Transverse colon (tissue), 4 donors: ENCODE measurements at regions of chr17 and their contacts with region 1.

Region 1: DNA sequence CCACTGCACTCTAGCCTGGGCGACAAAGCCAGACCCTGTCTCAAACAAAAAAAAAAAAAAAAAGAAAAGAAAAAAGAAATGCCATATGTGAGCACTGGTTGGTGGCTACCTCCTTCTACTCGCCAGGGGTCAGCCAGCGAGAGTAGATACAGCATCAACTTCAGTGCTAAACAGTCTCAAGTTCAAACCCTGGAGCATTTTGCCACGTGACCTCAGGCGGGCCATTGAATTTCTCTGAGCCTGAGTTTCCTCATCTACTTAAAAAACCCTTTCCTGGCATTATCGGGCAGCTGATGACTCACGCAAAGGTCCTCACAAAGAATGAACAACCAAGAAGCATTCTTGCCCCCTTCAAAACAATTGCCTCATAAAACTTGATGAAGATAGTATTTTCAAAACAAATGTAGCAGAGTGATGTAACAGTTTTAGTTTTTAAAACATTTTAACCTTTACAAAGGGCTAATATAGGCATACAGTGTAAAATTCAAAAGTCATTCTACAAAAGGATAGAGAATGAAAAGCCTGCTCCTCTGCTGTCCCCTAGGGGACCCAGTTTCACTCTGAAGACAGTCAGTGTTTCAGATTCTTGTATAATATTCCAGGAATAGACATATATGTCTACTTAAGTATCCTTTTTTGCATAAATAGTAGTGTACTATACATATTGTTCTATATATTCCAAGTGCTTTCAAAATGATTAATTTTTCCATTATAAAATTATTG is 28.4 kb downstream of the DNAH2 start:
- DNase-seq: no peak
- H3K4me3 ChIP-seq: no peak overlapping the region
- H3K27ac ChIP-seq: no peak overlapping the region
- H3K4me1 ChIP-seq: peaks cover 0 to 16% (median 7%) of the 10 kb centered on the region in 4 donors
- H3K27me3 ChIP-seq: peaks cover under 1% of the 10 kb centered on the region
- CTCF ChIP-seq: no peak
- EP300 ChIP-seq: no peak
- POLR2A ChIP-seq: no peak

Region 2: DNA sequence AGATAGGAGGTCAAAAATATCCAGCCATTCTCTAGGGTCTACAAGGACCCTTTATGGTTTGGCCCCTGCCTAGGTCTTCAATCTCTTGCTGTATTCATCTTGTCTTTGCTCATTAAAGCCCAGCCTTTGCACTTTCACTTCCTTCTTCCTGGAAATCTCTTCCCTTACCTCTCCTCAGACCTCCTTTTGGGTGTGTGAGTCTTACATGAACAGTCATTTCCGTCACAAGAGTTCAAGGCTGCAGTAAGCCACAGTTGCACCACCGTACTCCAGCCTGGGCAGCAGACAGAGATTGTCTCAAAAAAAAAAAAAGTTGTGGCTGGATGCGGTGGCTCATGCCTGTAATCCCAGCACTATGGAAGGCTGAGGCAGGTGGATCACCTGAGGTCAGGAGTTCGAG is 101.1 kb before region 1 on chr17:
- in situ Hi-C with region 1: no loop called
- intact Hi-C with region 1: no loop called
- DNase-seq: no peak
- H3K4me3 ChIP-seq: no peak overlapping the region
- H3K27ac ChIP-seq: no peak overlapping the region
- H3K4me1 ChIP-seq: no peaks in the 10 kb centered on the region
- H3K27me3 ChIP-seq: peaks cover 18% of the 10 kb centered on the region
- CTCF ChIP-seq: no peak
- EP300 ChIP-seq: no peak
- POLR2A ChIP-seq: no peak

Region 3: DNA sequence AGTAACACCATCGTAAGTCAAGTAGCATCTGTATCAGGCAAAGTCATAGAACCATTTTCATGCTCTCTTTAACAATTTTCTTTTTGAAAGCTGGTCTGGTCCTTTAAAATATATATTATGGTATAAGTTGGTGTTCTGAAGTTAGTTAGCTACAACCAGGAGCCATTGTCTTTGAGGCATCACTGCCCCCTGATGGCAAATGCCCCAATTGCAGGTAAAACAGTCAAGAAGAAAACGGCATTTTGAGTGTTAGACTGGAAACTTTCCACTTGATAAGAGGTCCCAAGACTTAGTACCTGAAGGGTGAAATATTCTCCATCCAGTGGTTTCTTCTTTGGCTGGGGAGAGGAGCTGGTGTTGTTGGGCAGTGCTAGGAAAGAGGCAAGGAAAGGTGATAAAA is 72.7 kb before region 1 on chr17:
- in situ Hi-C with region 1: no loop called
- intact Hi-C with region 1: no loop called
- DNase-seq: peak; percentile 15
- H3K4me3 ChIP-seq: no peak overlapping the region
- H3K27ac ChIP-seq: no peak overlapping the region
- H3K4me1 ChIP-seq: no peaks in the 10 kb centered on the region
- H3K27me3 ChIP-seq: no peaks in the 10 kb centered on the region
- CTCF ChIP-seq: peak in 4 of 5 experiments; percentile 37 to 44 (median 39)
- EP300 ChIP-seq: no peak
- POLR2A ChIP-seq: no peak

Region 4: DNA sequence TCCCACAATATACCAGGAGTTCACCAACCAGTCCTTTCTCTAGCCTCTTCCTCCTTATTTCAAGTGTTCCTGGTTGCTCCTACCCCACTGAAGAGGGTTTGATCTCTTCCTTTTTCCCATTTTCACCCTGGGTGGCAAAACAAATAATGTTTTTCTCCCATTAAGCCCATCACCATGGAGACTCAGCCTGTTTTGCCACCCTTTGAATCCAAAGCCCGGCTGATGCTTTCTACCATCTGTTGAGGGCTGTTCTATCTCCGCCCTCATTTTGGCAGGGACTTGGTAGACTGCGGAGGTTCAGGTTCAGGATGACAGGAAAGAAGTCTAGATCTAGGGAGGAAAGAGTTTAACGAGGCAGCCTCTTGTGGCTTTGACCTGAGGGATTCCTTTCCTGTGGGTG is 25.8 kb before region 1 on chr17:
- in situ Hi-C with region 1: no loop called
- intact Hi-C with region 1: loop called (anchors 1 kb)
- DNase-seq: no peak
- H3K4me3 ChIP-seq: no peak overlapping the region
- H3K27ac ChIP-seq: no peak overlapping the region
- H3K4me1 ChIP-seq: peaks cover 9 to 23% (median 18%) of the 10 kb centered on the region in 4 donors
- H3K27me3 ChIP-seq: peaks cover 51% of the 10 kb centered on the region
- CTCF ChIP-seq: no peak
- EP300 ChIP-seq: no peak
- POLR2A ChIP-seq: no peak

Region 5: DNA sequence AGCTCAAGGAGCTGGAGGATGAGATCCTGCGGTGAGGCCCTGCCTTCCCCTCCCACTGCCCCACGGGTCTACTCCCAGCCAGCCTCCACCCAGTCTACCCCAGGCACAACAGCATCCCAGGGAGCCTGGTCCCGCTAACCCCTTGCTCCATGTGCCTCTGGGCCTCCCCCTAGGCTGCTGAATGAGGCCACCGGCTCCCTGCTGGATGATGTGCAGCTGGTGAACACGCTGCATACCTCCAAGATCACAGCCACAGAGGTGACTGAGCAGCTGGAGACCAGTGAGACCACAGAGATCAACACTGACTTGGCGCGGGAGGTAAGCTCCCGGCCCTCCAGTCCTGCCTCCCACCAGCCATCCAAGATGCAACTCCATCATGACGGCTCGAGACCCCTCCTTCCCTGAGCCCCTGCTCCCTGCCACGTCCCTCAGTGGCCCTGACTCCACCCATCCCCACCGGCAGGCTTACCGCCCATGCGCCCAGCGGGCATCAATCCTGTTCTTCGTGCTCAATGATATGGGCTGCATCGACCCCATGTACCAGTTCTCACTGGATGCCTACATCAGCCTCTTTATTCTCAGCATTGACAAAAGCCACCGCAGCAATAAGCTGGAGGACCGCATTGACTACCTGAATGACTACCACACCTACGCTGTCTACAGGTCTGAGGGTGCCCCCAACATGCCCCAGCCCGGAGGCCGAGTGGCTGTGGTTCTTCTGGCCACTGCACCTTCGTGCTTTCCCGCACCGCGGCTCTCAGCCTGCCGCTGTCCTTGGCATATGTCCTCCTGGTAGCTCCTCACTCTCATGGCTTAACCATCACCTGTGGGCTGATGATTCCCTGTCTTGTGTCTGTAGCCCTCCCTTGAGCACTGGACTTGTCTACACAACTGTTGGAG is 73.1 kb after region 1 on chr17:
- in situ Hi-C with region 1: loop called in 1 of 4 experiments (anchors 10 kb)
- intact Hi-C with region 1: no loop called
- DNase-seq: no peak
- H3K4me3 ChIP-seq: no peak overlapping the region
- H3K27ac ChIP-seq: no peak overlapping the region
- H3K4me1 ChIP-seq: no peaks in the 10 kb centered on the region
- H3K27me3 ChIP-seq: no peaks in the 10 kb centered on the region
- CTCF ChIP-seq: no peak
- EP300 ChIP-seq: no peak
- POLR2A ChIP-seq: no peak